Naive thymus-derived CD4-positive, alpha-beta T cell (primary cell): ENCODE measurements at regions of chr1 and their contacts with region 1.

Region 1: DNA sequence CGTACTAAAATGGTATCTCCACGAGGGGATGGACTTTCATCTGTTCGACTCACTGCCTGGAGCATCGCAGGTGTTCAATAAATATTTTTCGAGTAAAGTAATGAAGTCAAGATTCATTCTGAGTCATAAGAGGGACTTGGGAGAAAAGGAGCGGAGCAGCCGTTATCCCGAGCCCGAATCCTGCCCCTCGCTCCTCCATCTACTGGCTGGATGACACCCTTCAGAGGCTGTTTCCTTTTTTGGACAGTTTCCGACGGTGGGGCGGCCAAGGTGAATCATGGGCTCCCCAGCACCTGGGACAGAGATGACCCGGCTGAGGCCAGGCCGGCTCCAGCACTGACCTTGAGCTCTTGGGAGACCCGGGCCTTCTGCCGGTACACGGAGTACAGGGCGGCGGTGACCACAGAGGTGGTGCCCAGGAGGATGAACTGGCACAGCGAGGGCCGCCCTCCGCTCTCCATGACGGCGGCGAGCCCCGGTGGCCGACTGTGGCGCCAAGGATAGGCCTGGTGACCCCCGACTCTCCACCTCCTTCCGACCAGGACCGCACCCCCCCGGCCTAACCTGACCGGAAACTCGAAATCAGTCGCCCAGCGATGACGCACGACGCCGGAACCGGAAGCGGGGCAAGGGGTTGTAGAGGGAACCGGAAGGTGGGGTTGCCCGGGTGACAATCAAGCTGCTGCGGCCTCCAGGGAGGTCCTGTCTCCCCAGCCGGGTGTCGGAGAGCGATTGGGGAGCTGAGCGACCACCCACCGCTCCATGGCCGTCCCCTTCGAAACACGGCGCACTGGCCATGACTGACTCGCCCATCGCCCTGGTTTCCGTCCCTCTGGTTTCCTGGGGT is at the start of gene MUL1:
- DNase-seq: peak; percentile 83 to 95 (median 89)
- ATAC-seq: peak; percentile 94
- H3K4me3 ChIP-seq: peak within 1 kb of the TSS; percentile 88
- H3K4me3 Mint-ChIP-seq: peak within 1 kb of the TSS; percentile 83 to 98 (median 88)
- H3K27ac ChIP-seq: peak within 1 kb of the TSS; percentile 97
- H3K27ac Mint-ChIP-seq: peak within 1 kb of the TSS; percentile 72 to 97 (median 92)
- H3K4me1 ChIP-seq: peaks cover 8 to 22% of the 10 kb centered on the region in 2 donors
- H3K4me1 Mint-ChIP-seq: peaks cover 15 to 40% (median 23%) of the 10 kb centered on the region in 7 donors
- H3K27me3 ChIP-seq: no peaks in the 10 kb centered on the region
- H3K27me3 Mint-ChIP-seq: peaks cover 0 to 5% (median 1%) of the 10 kb centered on the region in 5 donors
- total RNA-seq, gene MUL1: 16.5 to 21.5 (median 20.5) TPM

Region 2: DNA sequence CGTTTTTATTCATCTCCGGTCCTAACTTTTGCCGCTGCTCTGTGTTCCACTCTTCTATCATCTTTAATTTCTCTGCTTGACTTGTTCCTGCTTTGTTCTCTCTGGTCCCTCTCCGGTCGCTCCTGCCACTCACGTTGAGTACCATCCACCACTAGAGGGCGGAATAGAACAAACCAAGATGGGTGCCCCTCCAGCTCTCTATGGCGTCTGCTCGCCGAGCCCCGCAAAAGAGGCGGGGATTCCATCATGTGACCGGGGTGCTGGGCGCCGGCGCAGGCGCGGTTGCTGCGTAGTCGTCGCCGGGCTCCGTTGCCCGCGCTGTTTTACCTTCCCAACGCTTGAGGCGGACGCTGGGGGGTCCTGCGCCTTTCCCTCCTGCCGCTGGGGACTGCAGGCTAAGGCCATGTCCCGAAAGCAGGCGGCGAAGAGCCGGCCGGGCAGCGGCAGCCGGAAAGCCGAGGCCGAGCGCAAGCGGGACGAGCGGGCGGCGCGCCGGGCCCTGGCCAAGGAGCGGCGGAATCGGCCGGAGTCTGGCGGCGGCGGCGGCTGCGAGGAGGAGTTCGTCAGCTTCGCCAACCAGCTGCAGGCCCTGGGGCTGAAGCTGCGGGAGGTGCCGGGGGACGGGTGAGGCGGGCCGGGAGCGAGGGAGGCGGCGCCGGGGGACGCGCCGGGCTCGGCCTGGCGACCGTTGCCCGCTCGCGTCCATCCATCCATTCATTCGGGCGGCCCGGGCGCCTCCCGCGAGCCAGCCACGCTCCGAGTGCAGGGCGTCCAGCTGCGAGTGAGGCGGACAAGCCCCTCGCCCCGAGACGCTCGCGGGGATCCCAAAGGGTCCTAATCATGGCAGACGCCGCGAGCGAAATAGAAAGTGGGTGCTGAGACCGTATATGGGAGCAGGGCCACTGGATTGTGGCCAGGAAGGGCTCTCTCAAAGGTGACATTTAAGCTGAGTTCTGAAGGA is 625.4 kb before region 1 on chr1 and contains the start of gene OTUD3:
- CTCF ChIA-PET with region 1: no interaction called
- POLR2A ChIA-PET with region 1: no interaction called
- intact Hi-C with region 1: loop called in 1 of 2 experiments (anchors 1 kb)
- DNase-seq: peak; percentile 87 to 97 (median 96)
- ATAC-seq: peak; percentile 100
- H3K4me3 ChIP-seq: peak within 1 kb of the TSS; percentile 66
- H3K4me3 Mint-ChIP-seq: peak within 1 kb of the TSS; percentile 77 to 95 (median 88)
- H3K27ac ChIP-seq: peak within 1 kb of the TSS; percentile 82
- H3K27ac Mint-ChIP-seq: peak within 1 kb of the TSS; percentile 3 to 88 (median 75)
- H3K4me1 ChIP-seq: peaks cover 15 to 23% of the 10 kb centered on the region in 2 donors
- H3K4me1 Mint-ChIP-seq: peaks cover 20 to 50% (median 47%) of the 10 kb centered on the region in 7 donors
- H3K27me3 ChIP-seq: no peaks in the 10 kb centered on the region
- H3K27me3 Mint-ChIP-seq: peaks cover 0 to 15% (median 6%) of the 10 kb centered on the region in 5 donors
- total RNA-seq, gene OTUD3: 13.1 to 23.6 (median 20.8) TPM

Region 3: GRCh38 chr1:20426923-20427322 is 80.9 kb before region 1 on chr1:
- CTCF ChIA-PET with region 1: no interaction called
- POLR2A ChIA-PET with region 1: no interaction called
- intact Hi-C with region 1: no loop called
- DNase-seq: peak in 1 of 9 donors; percentile 25
- ATAC-seq: no peak
- H3K4me3 ChIP-seq: no peak overlapping the region
- H3K4me3 Mint-ChIP-seq: no peak overlapping the region
- H3K27ac ChIP-seq: no peak overlapping the region
- H3K27ac Mint-ChIP-seq: no peak overlapping the region
- H3K4me1 ChIP-seq: no peaks in the 10 kb centered on the region
- H3K4me1 Mint-ChIP-seq: peaks cover 0 to 13% (median 0%) of the 10 kb centered on the region in 7 donors
- H3K27me3 ChIP-seq: no peaks in the 10 kb centered on the region
- H3K27me3 Mint-ChIP-seq: peaks cover 24 to 44% (median 28%) of the 10 kb centered on the region in 5 donors

Region 4: DNA sequence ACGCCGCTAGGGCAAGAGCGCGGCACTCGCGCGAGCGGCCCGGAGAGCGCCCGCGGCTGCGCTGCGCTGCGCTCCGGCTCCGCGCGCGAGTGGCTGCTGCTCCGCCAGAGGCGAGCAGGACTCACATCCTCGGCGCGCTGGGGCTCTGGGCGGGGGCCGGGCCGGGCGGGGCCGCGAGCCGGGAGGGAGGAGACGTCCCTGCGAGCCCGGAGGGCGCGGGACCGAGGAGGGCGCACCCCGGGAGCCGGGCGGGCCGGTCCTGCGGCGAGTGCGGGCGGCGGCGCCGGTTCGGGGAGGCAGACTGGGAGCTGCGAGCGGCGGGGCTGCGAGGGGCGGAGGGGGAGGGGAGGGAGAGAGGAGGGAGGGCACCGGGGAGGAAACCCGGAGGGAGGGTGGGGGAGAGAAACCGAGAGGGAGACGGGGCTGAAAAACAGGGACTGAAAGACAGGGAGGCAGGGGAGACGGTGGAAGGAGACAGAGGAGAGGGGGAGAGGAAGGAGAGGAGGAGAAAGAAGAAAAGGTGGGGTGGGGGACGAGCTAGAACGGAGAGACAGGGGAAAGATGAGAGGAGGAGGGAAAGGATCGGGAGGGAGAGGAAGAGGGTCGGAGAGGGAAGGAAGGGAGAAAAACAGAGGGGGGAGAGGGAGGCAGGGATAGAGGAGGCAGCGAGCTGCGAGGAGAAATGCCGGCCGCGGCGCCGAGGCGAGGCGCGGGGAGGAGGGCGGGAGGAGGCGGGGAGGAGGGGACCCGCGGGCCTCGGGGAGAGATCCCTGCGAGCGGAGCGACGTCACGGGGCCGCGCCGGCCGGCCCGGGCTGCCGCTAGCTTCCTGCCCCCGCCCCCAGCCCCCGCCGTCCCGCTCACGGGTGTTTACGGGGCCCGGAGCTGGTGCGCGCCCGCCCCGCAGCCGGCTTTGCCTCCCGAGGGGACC is 22.0 kb before region 1 on chr1 and contains the start of gene CAMK2N1:
- CTCF ChIA-PET with region 1: no interaction called
- POLR2A ChIA-PET with region 1: interaction called, 3 read pairs
- intact Hi-C with region 1: loop called in 1 of 2 experiments (anchors 1 kb)
- DNase-seq: peak in 8 of 9 donors; percentile 26 to 55 (median 32)
- ATAC-seq: peak; percentile 81
- H3K4me3 ChIP-seq: peak within 1 kb of the TSS; percentile 67
- H3K4me3 Mint-ChIP-seq: peak within 1 kb of the TSS; percentile 78 to 98 (median 88)
- H3K27ac ChIP-seq: peak within 1 kb of the TSS; percentile 29
- H3K27ac Mint-ChIP-seq: peak within 1 kb of the TSS in 5 of 9 donors; percentile 5 to 68 (median 51)
- H3K4me1 ChIP-seq: peaks cover 8 to 19% of the 10 kb centered on the region in 2 donors
- H3K4me1 Mint-ChIP-seq: peaks cover 11 to 21% (median 15%) of the 10 kb centered on the region in 7 donors
- H3K27me3 ChIP-seq: peaks cover 0 to 25% of the 10 kb centered on the region in 2 donors
- H3K27me3 Mint-ChIP-seq: peaks cover 29 to 80% (median 50%) of the 10 kb centered on the region in 5 donors
- total RNA-seq, gene CAMK2N1: 0.60 to 3.8 (median 2.9) TPM

Region 5: DNA sequence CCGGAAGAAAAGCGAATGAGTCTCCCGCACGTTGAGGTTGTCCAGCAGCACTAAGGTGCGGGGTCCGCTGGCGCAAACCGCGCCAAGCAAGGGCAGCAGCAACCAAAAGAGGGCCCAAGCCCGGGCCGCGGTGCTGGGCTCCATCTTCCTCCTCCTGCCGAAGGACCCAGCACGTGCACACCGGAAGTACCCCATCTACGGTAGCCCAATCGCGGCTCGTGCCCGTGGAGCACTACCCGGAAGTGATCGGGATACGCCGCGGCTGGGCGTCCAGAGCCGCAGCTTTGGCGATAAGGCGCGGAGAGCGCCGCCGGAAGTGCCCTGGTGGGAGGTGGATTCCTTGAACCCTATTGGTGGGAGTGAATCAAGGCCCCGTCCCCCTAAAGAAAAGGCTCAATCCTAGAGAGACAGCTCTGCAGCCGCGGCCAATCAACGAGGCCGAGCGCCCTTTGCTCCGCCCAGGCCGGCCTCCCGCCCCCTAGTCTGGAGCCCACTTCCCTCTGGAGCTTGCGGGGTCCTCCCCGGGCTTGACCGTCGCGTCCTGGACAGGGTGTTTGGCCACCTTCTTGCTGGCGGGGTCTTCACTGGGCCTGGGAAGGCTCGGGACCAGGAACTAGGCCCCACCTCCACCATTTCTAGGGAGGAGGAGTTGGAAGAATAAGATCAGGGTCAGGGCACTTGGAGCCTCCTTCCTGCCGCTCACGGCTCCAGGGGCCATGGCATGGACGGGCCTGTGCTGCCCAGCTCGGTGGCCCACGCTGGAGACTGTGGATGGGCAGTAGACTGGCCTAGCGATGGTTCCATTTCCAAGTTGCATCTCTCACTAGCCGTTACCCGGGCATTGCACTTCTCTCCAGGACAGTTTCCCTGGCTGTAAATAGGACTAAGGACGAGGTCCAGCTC is 153.7 kb after region 1 on chr1 and contains the start of gene DDOST:
- CTCF ChIA-PET with region 1: no interaction called
- POLR2A ChIA-PET with region 1: no interaction called
- intact Hi-C with region 1: loop called in 1 of 2 experiments (anchors 1 kb)
- DNase-seq: peak; percentile 78 to 96 (median 94)
- ATAC-seq: peak; percentile 98
- H3K4me3 ChIP-seq: peak within 1 kb of the TSS; percentile 93
- H3K4me3 Mint-ChIP-seq: peak within 1 kb of the TSS; percentile 89 to 99 (median 96)
- H3K27ac ChIP-seq: peak within 1 kb of the TSS; percentile 87
- H3K27ac Mint-ChIP-seq: peak within 1 kb of the TSS; percentile 85 to 99 (median 98)
- H3K4me1 ChIP-seq: peaks cover 21 to 24% of the 10 kb centered on the region in 2 donors
- H3K4me1 Mint-ChIP-seq: peaks cover 31 to 60% (median 41%) of the 10 kb centered on the region in 7 donors
- H3K27me3 ChIP-seq: no peaks in the 10 kb centered on the region
- H3K27me3 Mint-ChIP-seq: no peaks in the 10 kb centered on the region
- total RNA-seq, gene DDOST: 96.9 to 173 (median 109) TPM